ENCODE measurements at regions of chr15 and their contacts with region 1.

Region 1: DNA sequence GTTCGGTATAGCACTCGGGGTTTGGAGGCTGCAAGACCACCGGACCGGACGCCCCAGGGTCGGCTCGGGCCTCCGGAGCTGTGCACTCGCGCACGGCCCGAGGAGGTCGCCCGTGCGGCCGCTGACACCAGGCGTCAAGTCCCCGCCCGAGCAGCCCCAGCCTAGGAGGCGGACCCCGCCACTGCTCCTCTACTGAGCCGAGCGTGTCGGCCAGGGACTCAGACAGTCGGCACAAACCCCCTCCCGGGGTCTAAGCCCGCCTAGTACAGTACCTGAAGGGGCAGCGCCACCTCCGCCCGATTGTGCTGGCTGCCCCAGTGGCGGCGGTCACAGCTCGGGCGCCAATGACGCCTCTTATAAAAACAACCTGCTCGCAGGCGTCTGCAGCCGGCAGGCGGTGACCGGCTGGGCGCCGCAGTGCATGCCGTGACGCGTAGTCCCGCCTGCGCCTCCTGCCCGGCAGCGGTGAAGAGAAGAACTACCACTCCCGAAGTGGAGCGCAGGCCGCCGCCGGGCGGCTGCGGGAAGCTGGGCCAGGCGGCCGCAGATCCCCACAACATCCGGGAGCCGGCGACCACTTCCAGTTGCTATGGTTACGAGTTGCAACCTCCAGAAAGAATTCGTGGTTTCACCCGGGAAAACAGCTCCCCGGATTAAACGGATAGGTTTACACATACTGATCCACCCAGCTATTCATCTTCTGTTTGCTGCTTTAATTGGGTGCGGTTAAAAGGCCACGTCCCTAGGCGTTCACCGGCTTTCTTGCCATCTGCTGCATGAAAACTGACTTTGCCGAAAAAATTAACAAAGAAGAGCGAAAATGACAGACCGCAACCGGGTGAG is at the starts of genes CCPG1 and PIERCE2:
- DNase-seq: peak; percentile 96
- H3K4me3 ChIP-seq: peak within 1 kb of the TSS; percentile 67 to 96 (median 92)
- H3K27ac ChIP-seq: peak within 1 kb of the TSS; percentile 85 to 95 (median 93)
- H3K4me1 ChIP-seq: peaks cover 24 to 54% (median 45%) of the 10 kb centered on the region in 4 donors
- H3K27me3 ChIP-seq: no peaks in the 10 kb centered on the region
- CTCF ChIP-seq: peak; percentile 74 to 87 (median 81)
- EP300 ChIP-seq: no peak
- POLR2A ChIP-seq: no peak
- total RNA-seq, gene CCPG1: 38.9 to 49.4 (median 43.5) TPM
- total RNA-seq, gene PIERCE2: 3.3 to 4.2 (median 3.6) TPM

Region 2: GRCh38 chr15:55196458-55197361 is 211.5 kb before region 1 on chr15 and contains the start of gene RSL24D1:
- intact Hi-C with region 1: loop called (anchors 10 kb)
- DNase-seq: peak; percentile 98
- H3K4me3 ChIP-seq: peak within 1 kb of the TSS; percentile 76 to 87 (median 83)
- H3K27ac ChIP-seq: peak within 1 kb of the TSS; percentile 90 to 94 (median 91)
- H3K4me1 ChIP-seq: peaks cover 10 to 49% (median 37%) of the 10 kb centered on the region in 4 donors
- H3K27me3 ChIP-seq: no peaks in the 10 kb centered on the region
- CTCF ChIP-seq: peak; percentile 39 to 50 (median 40)
- EP300 ChIP-seq: no peak
- POLR2A ChIP-seq: no peak
- total RNA-seq, gene RSL24D1: 49.8 to 92.4 (median 75.5) TPM

Region 3: DNA sequence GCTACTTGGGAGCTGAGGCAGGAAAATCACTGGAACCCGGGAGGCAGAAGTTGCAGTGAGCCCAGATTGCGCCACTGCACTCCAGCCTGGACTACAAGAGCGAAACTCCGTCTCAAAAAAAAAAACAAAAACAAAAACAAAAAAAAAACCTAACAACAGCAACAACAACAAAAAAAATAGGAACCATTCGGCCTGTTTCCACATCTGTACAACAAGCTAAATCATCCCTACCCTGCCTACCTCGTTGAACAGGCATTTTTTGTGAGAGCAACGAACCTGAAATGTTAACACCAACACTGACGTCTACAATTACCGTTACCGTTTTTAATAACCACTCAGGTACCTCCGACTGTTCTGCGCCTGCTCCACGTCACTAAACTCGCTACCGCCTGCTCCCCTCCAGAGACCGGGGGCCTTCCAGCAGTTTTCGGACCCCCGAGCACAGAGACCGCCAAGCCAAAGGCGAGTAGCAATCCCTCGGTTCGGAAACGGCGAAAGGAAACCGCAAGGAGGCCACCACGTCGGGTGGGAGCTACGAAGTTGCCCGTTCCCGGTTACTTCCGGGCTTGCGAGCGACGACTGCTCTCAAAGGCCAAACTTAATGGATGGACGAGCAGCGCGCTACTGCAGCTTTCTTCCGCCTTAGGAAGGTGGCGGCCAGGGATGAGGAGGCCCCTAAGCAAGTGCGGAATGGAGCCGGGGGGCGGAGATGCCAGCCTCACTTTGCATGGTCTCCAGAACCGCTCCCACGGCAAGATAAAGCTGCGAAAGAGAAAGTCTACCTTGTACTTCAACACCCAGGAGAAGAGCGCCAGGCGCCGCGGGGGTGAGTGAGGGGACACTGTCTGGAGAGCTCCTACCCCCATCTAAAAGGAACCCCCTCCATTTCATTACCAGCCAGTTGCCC is 89.3 kb before region 1 on chr15 and contains the starts of genes PIGB and PIGBOS1:
- intact Hi-C with region 1: loop called (anchors 5 kb)
- DNase-seq: peak; percentile 96
- H3K4me3 ChIP-seq: peak within 1 kb of the TSS; percentile 61 to 87 (median 72)
- H3K27ac ChIP-seq: peak within 1 kb of the TSS; percentile 81 to 91 (median 87)
- H3K4me1 ChIP-seq: peaks cover 26 to 37% (median 35%) of the 10 kb centered on the region in 4 donors
- H3K27me3 ChIP-seq: no peaks in the 10 kb centered on the region
- CTCF ChIP-seq: peak in 2 of 3 experiments; percentile 15 to 24
- EP300 ChIP-seq: no peak
- POLR2A ChIP-seq: peak; percentile 7
- total RNA-seq, gene PIGB: 4.5 to 9.6 (median 6.5) TPM
- total RNA-seq, gene PIGBOS1: 10.6 to 21.6 (median 14.4) TPM

Measured in esophagus muscularis mucosa (tissue), 4 donors.